ENCODE measurements at regions of chr6 and their contacts with region 1.

Region 1: GRCh38 chr6:108896111-108896661 is 48.0 kb downstream of the ARMC2 start:
- DNase-seq: no peak
- H3K4me3 Mint-ChIP-seq: peak overlapping the region; percentile 22
- H3K27ac Mint-ChIP-seq: peak overlapping the region; percentile 91
- H3K4me1 Mint-ChIP-seq: peaks cover 36% of the 10 kb centered on the region
- H3K27me3 Mint-ChIP-seq: peaks cover 11% of the 10 kb centered on the region

Region 2: GRCh38 chr6:108835218-108835850 is 60.9 kb before region 1 on chr6:
- CTCF ChIA-PET with region 1: interaction called, 17 read pairs
- DNase-seq: peak; percentile 91
- H3K4me3 Mint-ChIP-seq: no peak overlapping the region
- H3K27ac Mint-ChIP-seq: no peak overlapping the region
- H3K4me1 Mint-ChIP-seq: peaks cover 29% of the 10 kb centered on the region
- H3K27me3 Mint-ChIP-seq: peaks cover 40% of the 10 kb centered on the region

Region 3: DNA sequence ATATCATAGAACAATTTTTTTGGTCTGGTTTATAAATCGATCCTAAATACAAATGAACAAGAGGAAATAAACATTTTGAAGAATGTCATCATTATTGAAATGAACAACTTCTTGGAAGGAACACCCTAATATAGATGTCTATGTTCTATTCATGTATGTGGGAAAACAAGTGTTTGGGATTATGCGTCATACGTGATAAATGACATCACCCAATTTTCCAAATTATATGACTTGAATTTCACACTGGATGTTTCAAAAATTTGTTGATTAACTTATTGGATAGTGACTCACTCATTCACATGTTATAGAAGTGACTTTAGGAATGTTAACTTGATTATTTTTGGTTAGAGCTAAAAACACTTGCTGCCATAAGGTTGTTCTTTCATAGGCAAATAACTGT is 29.4 kb before region 1 on chr6:
- CTCF ChIA-PET with region 1: interaction called, 12 read pairs
- DNase-seq: no peak
- H3K4me3 Mint-ChIP-seq: no peak overlapping the region
- H3K27ac Mint-ChIP-seq: no peak overlapping the region
- H3K4me1 Mint-ChIP-seq: peaks cover 47% of the 10 kb centered on the region
- H3K27me3 Mint-ChIP-seq: peaks cover 5% of the 10 kb centered on the region

Region 4: DNA sequence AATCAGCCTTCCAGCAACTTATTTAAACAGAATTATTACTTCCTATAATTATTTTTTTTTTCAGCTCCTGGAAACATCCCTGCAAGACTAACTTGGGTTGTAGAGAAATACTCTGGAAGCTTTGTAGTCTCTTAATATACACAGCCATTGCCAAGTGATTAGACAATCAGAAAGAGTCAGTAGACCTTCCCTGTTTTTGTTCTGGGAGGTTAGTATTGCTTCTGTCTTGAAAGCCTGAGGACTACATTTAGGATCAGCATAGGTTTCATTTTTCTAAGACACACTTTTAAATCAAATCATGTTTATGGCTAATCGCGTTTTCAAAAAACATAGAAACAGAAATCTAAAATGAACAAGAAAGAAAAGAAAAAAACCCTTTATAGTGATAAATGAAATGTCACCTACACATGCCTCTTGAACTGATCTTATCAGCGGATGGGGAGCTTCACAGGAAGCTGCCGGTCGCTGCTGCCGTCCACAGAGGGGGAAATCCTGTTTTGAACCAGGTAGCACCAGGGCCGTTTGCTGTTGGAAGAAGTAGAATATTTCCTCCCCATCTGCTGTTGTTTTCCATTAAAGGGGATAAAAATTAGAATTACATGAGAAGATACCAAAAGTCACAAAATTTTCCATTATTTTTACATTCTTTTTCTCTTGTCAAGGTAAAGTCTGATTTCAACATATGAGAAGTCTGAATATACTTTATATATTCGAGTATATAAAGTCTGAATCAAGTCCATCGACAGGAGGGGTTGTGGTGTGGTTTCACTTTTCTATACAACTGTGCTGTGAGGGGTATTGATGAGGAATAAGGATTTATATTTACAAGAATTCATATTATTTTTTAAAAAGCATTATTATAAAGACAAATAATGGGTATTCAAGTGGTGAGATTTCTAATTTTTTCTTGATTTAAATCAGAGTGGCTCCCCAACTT is 46.6 kb after region 1 on chr6:
- CTCF ChIA-PET with region 1: no interaction called
- DNase-seq: peak; percentile 79
- H3K4me3 Mint-ChIP-seq: peak overlapping the region; percentile 60
- H3K27ac Mint-ChIP-seq: peak overlapping the region; percentile 87
- H3K4me1 Mint-ChIP-seq: peaks cover 61% of the 10 kb centered on the region
- H3K27me3 Mint-ChIP-seq: no peaks in the 10 kb centered on the region

Region 5: GRCh38 chr6:109073344-109074132 is 177.4 kb after region 1 on chr6:
- CTCF ChIA-PET with region 1: interaction called, 10 read pairs
- DNase-seq: peak; percentile 59
- H3K4me3 Mint-ChIP-seq: no peak overlapping the region
- H3K27ac Mint-ChIP-seq: no peak overlapping the region
- H3K4me1 Mint-ChIP-seq: peaks cover 24% of the 10 kb centered on the region
- H3K27me3 Mint-ChIP-seq: peaks cover 4% of the 10 kb centered on the region

Region 6: DNA sequence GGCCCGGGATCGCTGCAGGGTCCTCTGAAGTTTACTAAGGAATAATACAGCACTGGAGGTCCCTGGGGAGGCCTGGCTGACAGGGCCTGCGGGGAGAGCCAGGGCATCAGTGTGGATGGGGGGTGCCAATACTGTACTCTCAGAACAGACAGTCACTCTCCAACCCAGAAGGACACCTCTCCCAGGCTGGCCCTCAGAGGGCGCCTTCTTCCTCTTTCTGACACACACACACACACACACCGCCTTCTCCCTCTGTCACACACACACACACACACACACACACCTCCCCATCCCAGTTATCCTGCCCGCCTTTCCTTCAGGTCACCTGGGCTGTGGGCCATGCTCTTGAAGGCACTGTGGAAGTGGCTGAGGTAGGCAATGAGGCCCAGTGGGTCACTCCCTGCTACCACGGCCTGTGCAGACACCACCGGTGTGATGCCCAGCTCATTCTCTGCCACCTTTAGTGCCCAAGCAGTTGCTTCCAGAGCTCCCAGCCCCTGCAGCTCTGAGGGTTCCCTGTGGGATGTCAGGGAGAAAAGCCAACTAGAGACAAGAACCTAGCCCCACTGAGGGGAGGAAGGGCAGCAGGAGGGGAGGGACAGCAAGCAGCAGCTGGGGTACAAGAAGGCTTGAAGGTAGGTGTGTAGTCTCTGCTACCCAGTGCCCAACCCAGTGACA is 551.8 kb after region 1 on chr6:
- CTCF ChIA-PET with region 1: no interaction called
- DNase-seq: no peak
- H3K4me3 Mint-ChIP-seq: no peak overlapping the region
- H3K27ac Mint-ChIP-seq: peak overlapping the region; percentile 56
- H3K4me1 Mint-ChIP-seq: peaks cover 56% of the 10 kb centered on the region
- H3K27me3 Mint-ChIP-seq: no peaks in the 10 kb centered on the region